Endothelial cell of umbilical vein (primary cell): ENCODE measurements at regions of chr9 and their contacts with region 1.

Region 1: DNA sequence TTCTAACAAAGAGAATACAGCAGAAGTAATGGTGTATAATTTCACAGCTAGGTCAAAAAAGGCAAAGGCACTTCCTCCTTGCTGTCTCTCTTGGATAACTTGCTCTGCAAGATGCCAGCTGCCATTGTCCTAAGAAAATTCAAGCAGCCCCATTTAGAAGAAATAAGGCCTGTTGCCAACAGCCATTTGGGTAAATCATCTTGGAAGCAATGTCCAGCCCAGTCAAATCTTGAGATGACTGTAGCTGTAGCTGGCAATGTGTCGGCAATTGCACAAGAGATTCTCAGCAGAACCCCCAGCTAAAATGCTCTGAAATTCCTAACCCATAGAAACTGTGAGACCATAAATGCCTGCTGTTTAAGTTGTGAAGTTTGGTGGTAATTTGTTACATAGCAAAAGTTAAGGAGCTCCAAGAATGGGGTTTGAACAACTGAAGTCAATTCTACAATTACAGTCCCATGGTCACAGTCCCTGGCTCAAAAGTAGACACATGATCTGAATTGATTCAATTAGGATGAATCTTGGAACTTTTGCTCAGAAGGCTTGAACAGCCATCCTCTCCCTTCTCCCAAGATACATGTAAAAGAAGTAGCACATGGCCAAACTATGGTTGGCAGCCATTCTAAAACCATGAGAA is 151.2 kb downstream of the MPDZ start:
- DNase-seq: no peak
- H3K4me3 ChIP-seq: no peak overlapping the region
- H3K27ac ChIP-seq: no peak overlapping the region
- H3K4me1 ChIP-seq: no peaks in the 10 kb centered on the region
- H3K27me3 ChIP-seq: no peaks in the 10 kb centered on the region
- CTCF ChIP-seq: no peak
- POLR2A ChIP-seq: no peak

Region 2: DNA sequence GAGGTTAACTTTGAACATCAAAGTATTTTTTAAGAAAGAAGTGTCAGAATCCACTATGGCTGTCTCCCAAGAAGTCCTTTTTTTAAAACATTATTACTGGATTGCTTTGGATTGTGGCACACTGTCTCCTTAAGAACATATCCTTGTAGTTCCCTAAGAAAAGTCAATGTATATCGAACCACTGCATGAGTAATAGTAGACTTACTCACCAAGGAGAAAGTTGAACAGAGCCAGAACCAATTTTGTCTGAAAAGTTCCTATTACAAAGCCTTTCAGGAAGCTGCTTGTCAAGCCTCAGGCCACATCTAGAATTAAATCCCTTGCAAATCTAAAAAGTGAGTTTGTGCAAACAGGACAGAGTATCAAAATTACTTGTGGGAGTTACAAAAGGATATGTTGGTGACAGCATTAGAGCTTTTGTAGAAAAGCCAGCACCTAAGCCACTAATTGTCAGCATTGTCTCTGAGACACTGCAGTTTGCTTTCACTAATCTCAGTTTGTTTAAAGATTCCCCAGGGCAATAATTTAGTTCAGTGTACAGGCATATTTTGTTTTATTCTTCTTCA is 44.3 kb before region 1 on chr9:
- CTCF ChIA-PET with region 1: no interaction called
- POLR2A ChIA-PET with region 1: no interaction called
- dilution Hi-C with region 1: no loop called
- intact Hi-C with region 1: no loop called
- DNase-seq: no peak
- H3K4me3 ChIP-seq: no peak overlapping the region
- H3K27ac ChIP-seq: no peak overlapping the region
- H3K4me1 ChIP-seq: peaks cover 5% of the 10 kb centered on the region
- H3K27me3 ChIP-seq: no peaks in the 10 kb centered on the region
- CTCF ChIP-seq: no peak
- POLR2A ChIP-seq: no peak

Region 3: GRCh38 chr9:13139641-13140171 is 11.4 kb after region 1 on chr9:
- CTCF ChIA-PET with region 1: interaction called, 15 read pairs
- POLR2A ChIA-PET with region 1: no interaction called
- dilution Hi-C with region 1: no loop called
- intact Hi-C with region 1: no loop called
- DNase-seq: peak; percentile 95
- H3K4me3 ChIP-seq: peak overlapping the region in 1 of 3 experiments; percentile 40
- H3K27ac ChIP-seq: peak overlapping the region; percentile 96
- H3K4me1 ChIP-seq: peaks cover 23% of the 10 kb centered on the region
- H3K27me3 ChIP-seq: no peaks in the 10 kb centered on the region
- CTCF ChIP-seq: no peak
- POLR2A ChIP-seq: no peak